GM10248 (cell line): ENCODE measurements at regions of chr1 and their contacts with region 1.

Region 1: GRCh38 chr1:178300352-178300699 is 196.4 kb downstream of the CLEC20A start:
- DNase-seq: no peak
- CTCF ChIP-seq: no peak

Region 2: DNA sequence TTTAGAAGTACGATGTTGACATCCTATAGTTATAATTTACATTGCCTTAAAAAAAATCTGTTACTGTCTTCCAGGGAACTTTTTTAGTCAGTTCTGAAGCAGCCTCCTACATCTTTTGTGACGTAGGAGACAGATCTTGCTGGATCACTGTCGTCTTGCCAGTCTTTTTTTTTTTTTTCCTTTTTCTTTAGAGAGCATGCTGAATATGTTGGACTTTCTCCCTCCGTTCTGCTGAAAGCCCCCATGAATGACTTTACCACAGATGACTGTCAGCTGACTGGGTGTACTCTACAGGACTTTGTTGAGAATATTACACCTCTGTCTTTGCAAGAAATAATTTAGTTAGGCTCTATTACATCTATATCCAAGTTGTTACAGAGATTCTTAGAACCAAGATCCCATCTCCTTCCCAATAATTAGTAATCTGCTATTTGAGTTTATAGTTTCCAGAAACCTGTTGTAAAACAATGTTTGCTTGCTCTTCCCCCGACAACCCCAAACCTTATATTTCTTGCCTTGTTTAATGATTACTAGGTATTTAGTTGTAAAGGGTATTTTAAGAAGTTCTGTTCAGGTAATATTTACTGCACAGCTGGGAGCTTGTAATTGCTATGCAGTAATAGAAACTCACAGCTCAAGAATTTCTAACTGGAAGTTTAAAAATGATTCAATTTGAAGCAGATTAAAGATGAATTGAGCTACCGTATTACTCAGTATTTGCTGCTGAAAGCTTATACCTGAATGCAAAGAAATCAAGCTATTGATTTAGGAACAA is 144.7 kb before region 1 on chr1:
- CTCF ChIA-PET with region 1: no interaction called
- POLR2A ChIA-PET with region 1: no interaction called
- DNase-seq: no peak
- CTCF ChIP-seq: no peak

Region 3: DNA sequence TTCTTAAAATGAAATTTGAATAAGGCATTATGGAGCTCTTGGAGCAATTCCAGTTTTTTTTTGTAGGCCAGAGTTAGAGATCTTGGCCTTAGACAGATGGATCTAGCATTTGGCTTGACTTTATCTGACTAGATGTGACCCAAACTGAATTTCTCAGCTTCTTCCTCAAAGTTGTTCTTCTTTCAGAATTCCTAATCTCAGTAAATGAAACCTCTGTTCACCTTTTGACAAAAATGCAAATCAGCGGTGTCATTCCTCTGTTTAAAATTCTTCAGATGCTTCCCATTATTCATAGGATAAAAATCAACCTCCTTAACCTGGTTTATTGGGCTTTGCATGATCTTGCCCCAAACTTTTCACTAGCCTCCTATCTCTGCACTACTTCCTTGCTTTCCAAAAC is 28.9 kb before region 1 on chr1:
- CTCF ChIA-PET with region 1: interaction called, 14 read pairs
- POLR2A ChIA-PET with region 1: no interaction called
- DNase-seq: no peak
- CTCF ChIP-seq: no peak

Region 4: GRCh38 chr1:178282949-178283367 is 17.4 kb before region 1 on chr1:
- CTCF ChIA-PET with region 1: interaction called, 20 read pairs
- POLR2A ChIA-PET with region 1: no interaction called
- DNase-seq: no peak
- CTCF ChIP-seq: no peak

Region 5: GRCh38 chr1:178310685-178311105 is 10.4 kb after region 1 on chr1:
- CTCF ChIA-PET with region 1: interaction called, 56 read pairs
- POLR2A ChIA-PET with region 1: no interaction called
- DNase-seq: peak; percentile 32
- CTCF ChIP-seq: peak; percentile 55

Region 6: DNA sequence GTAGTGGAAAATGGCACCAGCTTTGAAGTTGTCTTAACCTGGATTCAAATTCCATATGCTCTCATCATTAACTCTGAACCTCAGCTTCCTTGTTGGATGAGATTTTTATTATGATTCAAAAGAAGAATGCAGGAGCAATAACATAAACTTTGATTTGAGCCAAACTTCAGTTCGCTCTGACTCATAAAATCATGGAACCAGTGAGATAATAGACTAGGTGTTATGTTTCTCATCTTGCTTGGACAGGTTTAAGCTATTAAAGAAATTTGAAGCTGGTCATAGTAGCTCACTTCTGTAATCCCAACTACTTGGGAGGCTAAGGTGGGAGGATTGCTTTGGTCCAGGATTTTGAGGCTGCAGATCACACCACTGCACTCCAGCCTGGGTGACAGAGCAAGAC is 23.7 kb after region 1 on chr1:
- CTCF ChIA-PET with region 1: interaction called, 12 read pairs
- POLR2A ChIA-PET with region 1: no interaction called
- DNase-seq: no peak
- CTCF ChIP-seq: no peak

Region 7: DNA sequence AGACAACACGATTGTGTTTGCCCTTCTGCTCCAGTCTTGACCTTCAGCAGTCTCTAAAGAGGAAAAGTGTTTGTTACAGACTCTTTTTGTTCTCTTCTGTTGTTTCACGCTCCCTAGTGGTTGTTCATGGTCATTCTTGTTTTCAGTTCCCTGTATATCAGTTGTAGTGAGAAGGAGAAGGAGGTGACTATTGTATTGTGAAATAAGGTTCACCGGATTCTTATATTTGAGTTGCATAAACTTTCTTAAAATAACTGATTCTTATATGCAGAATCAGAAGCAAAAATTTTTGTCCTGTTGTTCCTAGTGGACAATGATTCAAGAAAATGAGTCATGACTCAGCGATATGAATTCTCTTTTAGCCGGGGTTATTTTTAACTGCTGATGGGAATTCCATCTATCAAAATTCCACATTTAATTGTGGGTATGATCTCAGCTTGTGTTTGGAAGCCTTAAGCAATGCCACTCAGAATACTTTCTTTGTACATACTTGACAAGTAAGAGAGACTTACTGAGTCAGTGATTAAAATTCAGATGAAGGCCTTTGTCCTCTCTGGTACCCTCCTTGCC is 44.3 kb after region 1 on chr1:
- CTCF ChIA-PET with region 1: interaction called, 10 read pairs
- POLR2A ChIA-PET with region 1: no interaction called
- DNase-seq: peak; percentile 15
- CTCF ChIP-seq: no peak